Right ventricle myocardium inferior (tissue), 1 donor: ENCODE measurements at regions of chr1 and their contacts with region 1.

Region 1: GRCh38 chr1:231544943-231545592 is 16.6 kb downstream of the TSNAX start:
- DNase-seq: no peak
- ATAC-seq: no peak

Region 2: DNA sequence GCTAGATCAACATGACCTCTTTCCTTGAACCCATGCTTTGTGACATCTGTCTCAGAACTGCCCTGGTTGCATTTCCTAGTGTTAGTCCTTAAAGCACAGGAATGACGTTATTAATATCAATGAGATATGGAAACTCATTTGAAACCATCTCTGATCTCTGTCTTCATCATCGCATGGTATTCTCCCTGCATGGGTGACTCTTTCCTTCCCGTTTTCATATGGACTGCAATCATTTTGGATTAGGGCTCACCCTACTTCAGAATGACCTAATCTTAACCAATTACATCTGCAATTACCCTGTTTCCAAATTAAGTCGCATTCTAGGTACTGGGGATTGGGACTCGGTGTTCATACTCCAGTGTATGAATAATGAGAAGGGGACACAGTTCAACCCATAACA is 39.9 kb after region 1 on chr1:
- intact Hi-C with region 1: loop called (anchors 5 kb)
- DNase-seq: no peak
- ATAC-seq: no peak

Region 3: DNA sequence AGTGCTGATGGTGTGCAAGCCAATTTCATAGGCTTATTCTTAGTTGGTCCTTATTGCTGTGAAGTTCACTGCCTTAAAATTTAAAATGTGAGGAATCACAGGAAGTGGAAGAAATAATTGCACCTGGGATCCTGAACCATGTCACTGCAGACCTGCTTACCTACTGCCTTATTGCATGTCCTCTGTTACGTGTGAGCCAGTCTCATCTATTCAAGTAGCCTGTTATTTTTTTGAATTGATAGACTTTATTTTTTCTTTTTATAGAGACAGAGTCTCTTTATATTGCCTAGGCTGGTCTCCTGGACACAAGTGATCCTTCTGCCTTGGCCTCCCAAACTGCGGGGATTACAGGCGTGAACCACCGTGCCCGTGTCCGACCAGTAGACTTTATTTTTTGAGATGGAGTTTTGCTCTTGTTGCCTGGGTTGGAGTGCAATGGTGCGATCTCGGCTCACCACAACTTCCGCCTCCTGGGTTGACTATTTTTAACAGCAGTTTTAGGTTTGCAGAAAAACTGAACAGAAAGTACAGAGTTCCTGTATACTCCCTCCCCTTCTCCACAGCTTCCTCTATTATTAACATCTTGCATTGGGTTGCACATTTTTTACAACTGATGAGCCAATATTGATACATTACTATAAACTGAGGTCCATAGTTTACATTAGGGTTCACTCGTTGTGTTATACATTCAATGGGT is 67.5 kb after region 1 on chr1:
- intact Hi-C with region 1: no loop called
- DNase-seq: peak; percentile 76
- ATAC-seq: peak; percentile 69